ENCODE measurements at regions of chr5 and their contacts with region 1.

Region 1: DNA sequence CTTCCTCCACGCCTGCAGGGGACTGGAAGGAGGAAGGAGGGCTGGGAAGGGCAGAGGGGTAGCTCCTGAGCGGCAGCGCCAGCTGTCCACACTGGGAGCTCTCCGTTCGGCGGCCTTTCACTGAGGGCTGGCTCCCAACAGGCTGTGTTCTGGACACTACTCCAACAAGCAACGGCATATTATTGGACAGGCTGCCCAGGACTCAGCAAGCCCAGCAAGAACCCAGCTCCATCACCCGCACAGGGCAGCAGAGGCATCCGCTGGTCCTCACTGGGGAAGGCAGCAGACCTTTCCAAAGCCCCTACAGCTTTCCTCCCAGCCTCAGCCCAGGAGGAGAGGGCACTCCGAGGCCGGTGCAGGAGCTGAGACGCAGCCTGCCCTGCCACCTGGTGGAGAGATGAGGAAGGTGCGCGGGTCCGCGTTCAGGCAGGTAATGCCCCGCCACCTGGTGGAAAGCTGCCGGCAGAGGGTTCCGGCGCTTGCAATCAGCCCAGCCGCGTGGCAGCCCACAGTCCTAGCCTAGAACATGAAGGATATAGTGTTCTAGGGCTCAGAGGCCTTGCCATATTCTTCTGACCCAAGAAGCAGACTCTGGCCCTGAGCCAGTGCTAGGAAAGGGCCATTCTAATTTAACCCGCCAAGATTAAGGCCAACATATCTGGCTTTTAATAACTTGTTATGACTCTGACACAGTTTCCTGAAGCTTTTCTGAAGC is 74.4 kb downstream of the NRG2 start:
- DNase-seq: peak; percentile 92
- ATAC-seq: peak; percentile 99
- H3K4me3 Mint-ChIP-seq: no peak overlapping the region
- H3K27ac Mint-ChIP-seq: no peak overlapping the region
- H3K4me1 Mint-ChIP-seq: no peaks in the 10 kb centered on the region
- H3K27me3 Mint-ChIP-seq: peaks cover 21% of the 10 kb centered on the region

Region 2: DNA sequence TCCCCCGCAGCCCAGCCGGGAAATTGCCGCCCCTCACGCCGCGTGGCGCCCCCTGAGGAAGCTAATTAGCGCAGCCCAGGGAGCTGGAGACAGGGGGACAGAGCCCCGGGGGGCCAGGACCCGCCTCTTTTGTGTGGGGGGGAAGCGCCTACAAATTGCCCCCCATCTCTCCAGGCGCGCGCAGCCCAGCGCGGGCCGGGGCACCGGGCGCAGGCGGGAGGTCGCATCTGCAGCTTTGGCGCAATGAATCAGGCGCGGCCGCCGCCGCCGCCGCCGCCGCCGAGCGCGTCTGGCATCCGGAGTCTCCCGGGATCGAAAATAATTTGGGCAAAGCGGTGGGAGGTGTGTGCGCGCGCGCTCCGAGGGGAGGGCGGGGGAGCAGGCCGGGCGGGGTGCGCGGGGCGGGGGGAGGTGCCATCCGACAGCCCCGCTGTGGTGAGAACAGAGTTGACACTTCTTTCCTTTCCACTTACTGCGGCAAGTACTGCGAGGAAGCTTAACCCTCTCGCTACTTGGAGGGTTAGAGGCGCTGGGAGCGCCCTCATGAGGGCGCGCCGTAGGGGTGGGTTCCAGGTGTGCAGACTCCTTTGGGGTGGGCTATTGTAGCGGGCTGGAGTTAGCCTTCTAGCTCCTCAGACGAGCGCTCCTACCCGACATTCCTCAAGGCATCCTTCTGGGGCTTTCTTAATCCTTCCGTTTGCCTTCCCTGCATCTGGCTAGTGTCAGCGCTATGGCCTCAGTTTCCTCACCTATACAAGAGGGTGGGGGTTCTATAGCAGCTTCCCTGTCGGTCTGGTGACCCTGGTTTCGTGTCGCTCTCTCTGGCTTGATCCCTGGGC is 257.4 kb before region 1 on chr5:
- CTCF ChIA-PET with region 1: no interaction called
- POLR2A ChIA-PET with region 1: no interaction called
- DNase-seq: peak; percentile 69
- ATAC-seq: peak; percentile 66
- H3K4me3 Mint-ChIP-seq: peak overlapping the region; percentile 64
- H3K27ac Mint-ChIP-seq: no peak overlapping the region
- H3K4me1 Mint-ChIP-seq: peaks cover 17% of the 10 kb centered on the region
- H3K27me3 Mint-ChIP-seq: peaks cover 15% of the 10 kb centered on the region

Region 3: DNA sequence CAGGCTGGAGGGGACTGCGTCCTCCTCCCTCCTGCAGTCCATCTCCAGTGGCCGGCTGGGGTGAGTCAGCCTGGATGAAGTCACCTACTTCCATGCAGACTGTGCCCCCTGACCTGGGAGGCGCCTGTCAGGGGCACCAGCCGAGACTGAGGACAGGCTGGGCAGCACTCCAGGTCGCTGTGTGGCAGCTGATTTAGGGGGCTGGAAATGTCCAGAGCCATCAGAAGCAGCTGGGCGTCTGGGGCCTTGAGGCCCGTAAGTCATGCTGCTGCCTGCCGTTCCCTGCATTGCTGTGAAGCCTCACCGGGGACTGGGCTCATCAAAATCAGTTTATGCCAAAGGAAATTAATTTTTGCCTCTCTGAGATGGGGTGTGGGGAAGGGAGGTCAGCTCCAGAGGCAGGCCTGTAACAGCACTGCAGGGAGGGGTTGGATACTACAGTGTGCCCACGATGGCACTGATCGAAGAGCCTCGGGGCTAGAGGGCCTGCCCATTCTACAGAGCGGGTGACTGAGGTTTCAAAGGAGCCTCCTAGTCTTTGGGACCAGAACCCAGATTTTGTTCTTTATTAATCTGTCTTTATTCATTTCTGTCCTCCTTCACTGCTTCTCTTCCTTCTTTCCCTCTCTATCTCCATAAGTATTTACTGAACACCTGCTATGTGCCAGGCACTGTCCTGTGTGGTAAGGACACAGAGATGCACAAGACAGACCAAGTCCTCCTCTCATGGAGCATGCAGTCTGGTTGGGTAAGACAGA is 243.5 kb before region 1 on chr5:
- CTCF ChIA-PET with region 1: no interaction called
- POLR2A ChIA-PET with region 1: no interaction called
- DNase-seq: no peak
- ATAC-seq: no peak
- H3K4me3 Mint-ChIP-seq: no peak overlapping the region
- H3K27ac Mint-ChIP-seq: no peak overlapping the region
- H3K4me1 Mint-ChIP-seq: no peaks in the 10 kb centered on the region
- H3K27me3 Mint-ChIP-seq: no peaks in the 10 kb centered on the region

Region 4: DNA sequence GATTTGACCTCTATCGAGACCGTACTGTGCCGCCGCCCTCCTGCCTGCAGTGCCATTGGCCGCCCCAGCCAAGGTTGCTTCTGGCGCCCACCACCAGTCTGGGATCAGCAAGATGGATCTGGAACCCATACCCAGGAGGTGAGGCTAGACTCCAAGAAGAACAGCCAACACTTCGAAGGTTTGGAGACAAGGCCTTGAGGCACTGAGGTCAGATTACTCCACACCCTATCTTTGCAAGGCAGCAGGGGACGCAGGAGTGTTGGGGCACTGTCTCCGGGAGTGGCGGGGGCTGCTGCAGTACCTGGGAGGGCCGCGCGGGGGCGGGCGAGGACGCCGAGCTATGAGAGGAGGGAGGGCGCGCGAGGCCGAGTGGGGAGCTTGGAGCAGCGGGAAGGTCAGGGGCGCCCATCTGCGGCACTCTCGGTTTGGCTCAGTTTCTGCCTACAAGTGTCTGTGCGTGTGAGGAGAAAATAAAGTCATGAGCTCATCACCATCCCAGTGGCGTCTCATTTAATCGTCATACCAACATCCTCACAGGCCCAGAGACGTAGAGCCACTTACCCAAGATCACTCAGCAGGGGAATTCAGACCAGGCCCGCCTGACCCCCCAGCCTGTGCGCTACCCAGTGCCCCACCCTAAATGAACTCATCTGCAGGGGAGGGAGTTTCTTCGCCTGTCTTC is 193.6 kb before region 1 on chr5:
- CTCF ChIA-PET with region 1: interaction called, 20 read pairs
- POLR2A ChIA-PET with region 1: no interaction called
- DNase-seq: peak; percentile 85
- ATAC-seq: peak; percentile 97
- H3K4me3 Mint-ChIP-seq: no peak overlapping the region
- H3K27ac Mint-ChIP-seq: no peak overlapping the region
- H3K4me1 Mint-ChIP-seq: peaks cover 4% of the 10 kb centered on the region
- H3K27me3 Mint-ChIP-seq: peaks cover 15% of the 10 kb centered on the region

Region 5: GRCh38 chr5:139796061-139796806 is 172.5 kb before region 1 on chr5:
- CTCF ChIA-PET with region 1: interaction called, 191 read pairs
- POLR2A ChIA-PET with region 1: no interaction called
- DNase-seq: no peak
- ATAC-seq: no peak
- H3K4me3 Mint-ChIP-seq: no peak overlapping the region
- H3K27ac Mint-ChIP-seq: no peak overlapping the region
- H3K4me1 Mint-ChIP-seq: no peaks in the 10 kb centered on the region
- H3K27me3 Mint-ChIP-seq: peaks cover 54% of the 10 kb centered on the region

Region 6: GRCh38 chr5:139863855-139864558 is 104.7 kb before region 1 on chr5:
- CTCF ChIA-PET with region 1: interaction called, 18 read pairs
- POLR2A ChIA-PET with region 1: no interaction called
- DNase-seq: peak; percentile 67
- ATAC-seq: peak; percentile 68
- H3K4me3 Mint-ChIP-seq: no peak overlapping the region
- H3K27ac Mint-ChIP-seq: no peak overlapping the region
- H3K4me1 Mint-ChIP-seq: no peaks in the 10 kb centered on the region
- H3K27me3 Mint-ChIP-seq: peaks cover 4% of the 10 kb centered on the region

Region 7: GRCh38 chr5:139955053-139955605 is 13.6 kb before region 1 on chr5:
- CTCF ChIA-PET with region 1: interaction called, 54 read pairs
- POLR2A ChIA-PET with region 1: no interaction called
- DNase-seq: no peak
- ATAC-seq: no peak
- H3K4me3 Mint-ChIP-seq: no peak overlapping the region
- H3K27ac Mint-ChIP-seq: no peak overlapping the region
- H3K4me1 Mint-ChIP-seq: no peaks in the 10 kb centered on the region
- H3K27me3 Mint-ChIP-seq: peaks cover 12% of the 10 kb centered on the region

Region 8: DNA sequence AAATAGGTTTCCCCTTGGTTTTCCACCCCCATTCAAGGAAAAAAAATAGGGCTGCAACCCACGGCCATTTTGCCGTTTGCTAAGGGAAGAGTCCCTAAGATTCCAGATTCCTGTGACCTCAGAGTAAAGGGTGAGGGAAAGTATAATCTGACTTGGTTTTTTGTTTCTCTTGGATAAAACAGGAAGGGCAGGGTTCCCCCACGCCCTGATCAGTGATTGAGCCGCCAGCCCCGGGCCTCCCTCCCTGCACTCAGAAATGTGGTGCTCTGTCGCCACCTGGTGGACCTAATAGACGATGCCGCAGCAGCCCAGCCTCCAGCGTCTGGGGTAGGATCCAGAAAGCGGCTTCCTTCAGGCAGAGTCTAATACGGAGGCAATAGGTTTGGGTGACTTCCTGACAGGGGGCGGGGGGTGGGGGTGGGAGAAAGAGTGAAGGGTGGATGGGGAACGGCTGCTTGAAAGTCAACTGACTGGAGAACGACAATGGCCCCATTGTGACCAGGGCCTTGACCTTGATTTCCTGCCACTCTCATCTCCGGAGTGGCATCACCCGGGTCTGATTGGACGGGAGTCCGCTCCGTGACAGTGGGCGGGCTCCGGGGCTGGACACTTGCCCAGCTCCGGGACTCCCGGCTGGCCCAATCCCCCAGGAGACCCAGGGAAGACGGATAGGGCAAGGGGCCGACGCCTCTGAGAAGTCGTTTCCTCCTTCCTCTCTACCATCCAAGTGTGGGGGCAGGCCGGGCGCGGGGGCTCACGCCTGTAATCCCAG is 188.5 kb after region 1 on chr5:
- CTCF ChIA-PET with region 1: interaction called, 10 read pairs
- POLR2A ChIA-PET with region 1: no interaction called
- DNase-seq: peak; percentile 90
- ATAC-seq: peak; percentile 98
- H3K4me3 Mint-ChIP-seq: peak overlapping the region; percentile 34
- H3K27ac Mint-ChIP-seq: peak overlapping the region; percentile 49
- H3K4me1 Mint-ChIP-seq: peaks cover 9% of the 10 kb centered on the region
- H3K27me3 Mint-ChIP-seq: peaks cover 6% of the 10 kb centered on the region

Region 9: GRCh38 chr5:140346348-140347101 is 377.8 kb after region 1 on chr5 and contains the start of gene HBEGF:
- CTCF ChIA-PET with region 1: no interaction called
- POLR2A ChIA-PET with region 1: no interaction called
- DNase-seq: peak; percentile 62
- ATAC-seq: peak; percentile 70
- H3K4me3 Mint-ChIP-seq: peak within 1 kb of the TSS; percentile 84
- H3K27ac Mint-ChIP-seq: peak within 1 kb of the TSS; percentile 70
- H3K4me1 Mint-ChIP-seq: peaks cover 66% of the 10 kb centered on the region
- H3K27me3 Mint-ChIP-seq: peaks cover 6% of the 10 kb centered on the region
- total RNA-seq, gene HBEGF: 12.6 to 13.5 TPM

Region 10: GRCh38 chr5:140391312-140391711 is 422.6 kb after region 1 on chr5:
- CTCF ChIA-PET with region 1: no interaction called
- POLR2A ChIA-PET with region 1: no interaction called
- DNase-seq: no peak
- ATAC-seq: no peak
- H3K4me3 Mint-ChIP-seq: no peak overlapping the region
- H3K27ac Mint-ChIP-seq: no peak overlapping the region
- H3K4me1 Mint-ChIP-seq: peaks cover 3% of the 10 kb centered on the region
- H3K27me3 Mint-ChIP-seq: no peaks in the 10 kb centered on the region